GM12878 (cell line): ENCODE measurements at regions of chr18 and their contacts with region 1.

Region 1: GRCh38 chr18:31555971-31556747 is 35.5 kb upstream of the TTR start:
- DNase-seq: peak; percentile 39
- ATAC-seq: peak; percentile 88
- H3K4me3 ChIP-seq: no peak overlapping the region
- H3K27ac ChIP-seq: no peak overlapping the region
- H3K4me1 ChIP-seq: no peaks in the 10 kb centered on the region
- H3K27me3 ChIP-seq: no peaks in the 10 kb centered on the region
- CTCF ChIP-seq: peak; percentile 62 to 79 (median 72); a peak in 5 of 6 replicates
- EP300 ChIP-seq: no peak
- POLR2A ChIP-seq: no peak
- RAD21 ChIP-seq: peak; percentile 96

Region 2: GRCh38 chr18:30730915-30731314 is 825.2 kb before region 1 on chr18:
- CTCF ChIA-PET with region 1: no interaction called
- POLR2A ChIA-PET with region 1: no interaction called
- RAD21 ChIA-PET with region 1: no interaction called
- SMC1A ChIA-PET with region 1: no interaction called
- in situ Hi-C with region 1: no loop called
- intact Hi-C with region 1: no loop called
- DNase-seq: no peak
- ATAC-seq: no peak
- H3K4me3 ChIP-seq: no peak overlapping the region
- H3K27ac ChIP-seq: no peak overlapping the region
- H3K4me1 ChIP-seq: no peaks in the 10 kb centered on the region
- H3K27me3 ChIP-seq: no peaks in the 10 kb centered on the region
- CTCF ChIP-seq: no peak
- EP300 ChIP-seq: no peak
- POLR2A ChIP-seq: no peak
- RAD21 ChIP-seq: no peak

Region 3: GRCh38 chr18:30971338-30971956 is 584.7 kb before region 1 on chr18:
- CTCF ChIA-PET with region 1: interaction called, 3 read pairs
- POLR2A ChIA-PET with region 1: no interaction called
- RAD21 ChIA-PET with region 1: no interaction called
- SMC1A ChIA-PET with region 1: no interaction called
- in situ Hi-C with region 1: no loop called
- intact Hi-C with region 1: loop called (anchors 10 kb)
- DNase-seq: no peak
- ATAC-seq: peak; percentile 80
- H3K4me3 ChIP-seq: no peak overlapping the region
- H3K27ac ChIP-seq: no peak overlapping the region
- H3K4me1 ChIP-seq: no peaks in the 10 kb centered on the region
- H3K27me3 ChIP-seq: no peaks in the 10 kb centered on the region; a peak in 1 of 4 replicates
- CTCF ChIP-seq: peak; percentile 21 to 49 (median 41); a peak in 4 of 6 replicates
- EP300 ChIP-seq: no peak
- POLR2A ChIP-seq: no peak
- RAD21 ChIP-seq: peak; percentile 34; the same call in 1 of the 2 replicates

Region 4: DNA sequence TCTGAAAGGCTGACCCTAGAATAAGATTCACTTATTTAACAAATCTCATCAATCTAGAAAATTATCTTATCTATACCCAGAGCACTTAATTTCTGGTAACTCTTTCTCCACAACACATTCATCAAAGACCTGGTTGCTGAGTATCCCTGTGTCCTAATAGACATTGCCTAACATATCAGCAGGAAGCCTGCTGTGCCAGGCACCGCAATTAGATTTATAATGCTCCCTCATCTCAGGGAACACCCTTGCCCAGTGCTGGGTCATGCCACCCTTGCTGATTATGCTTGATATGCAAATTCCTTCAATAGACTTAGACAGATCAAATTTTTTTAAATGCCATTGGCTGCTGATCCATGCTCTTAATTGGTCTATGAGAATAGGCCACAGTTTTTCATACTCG is 234.4 kb before region 1 on chr18:
- CTCF ChIA-PET with region 1: no interaction called
- POLR2A ChIA-PET with region 1: no interaction called
- RAD21 ChIA-PET with region 1: no interaction called
- SMC1A ChIA-PET with region 1: no interaction called
- in situ Hi-C with region 1: no loop called
- intact Hi-C with region 1: no loop called
- DNase-seq: no peak
- ATAC-seq: no peak
- H3K4me3 ChIP-seq: no peak overlapping the region
- H3K27ac ChIP-seq: no peak overlapping the region
- H3K4me1 ChIP-seq: no peaks in the 10 kb centered on the region
- H3K27me3 ChIP-seq: no peaks in the 10 kb centered on the region
- CTCF ChIP-seq: no peak
- EP300 ChIP-seq: no peak
- POLR2A ChIP-seq: no peak
- RAD21 ChIP-seq: no peak

Region 5: GRCh38 chr18:31741097-31741735 is 185.1 kb after region 1 on chr18:
- CTCF ChIA-PET with region 1: interaction called, 11 read pairs
- POLR2A ChIA-PET with region 1: no interaction called
- RAD21 ChIA-PET with region 1: interaction called, 9 read pairs
- SMC1A ChIA-PET with region 1: interaction called, 7 read pairs
- in situ Hi-C with region 1: no loop called
- intact Hi-C with region 1: loop called (anchors 1 kb)
- DNase-seq: peak; percentile 16
- ATAC-seq: peak; percentile 72
- H3K4me3 ChIP-seq: no peak overlapping the region
- H3K27ac ChIP-seq: no peak overlapping the region
- H3K4me1 ChIP-seq: no peaks in the 10 kb centered on the region
- H3K27me3 ChIP-seq: no peaks in the 10 kb centered on the region
- CTCF ChIP-seq: peak; percentile 59 to 77 (median 74)
- EP300 ChIP-seq: no peak
- POLR2A ChIP-seq: no peak
- RAD21 ChIP-seq: peak; percentile 72

Region 6: DNA sequence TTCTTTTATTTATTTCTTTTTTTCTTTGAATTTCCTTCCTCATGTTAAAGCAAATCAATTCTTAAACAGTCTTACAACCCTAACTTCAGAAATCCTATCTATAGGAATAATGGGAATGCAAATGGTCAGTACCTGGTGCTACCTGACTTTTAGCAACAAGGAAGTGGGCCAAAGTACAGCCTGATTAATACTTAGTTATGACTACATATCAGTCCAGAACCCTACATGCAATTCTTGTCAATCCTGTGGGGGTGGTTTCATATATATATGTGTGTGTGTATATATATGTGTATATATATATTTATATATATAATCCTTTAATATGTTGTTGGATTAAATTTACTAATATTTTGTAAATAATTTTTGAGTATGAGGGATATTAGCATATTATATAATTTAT is 401.6 kb after region 1 on chr18:
- CTCF ChIA-PET with region 1: no interaction called
- POLR2A ChIA-PET with region 1: no interaction called
- RAD21 ChIA-PET with region 1: no interaction called
- SMC1A ChIA-PET with region 1: no interaction called
- in situ Hi-C with region 1: no loop called
- intact Hi-C with region 1: loop called (anchors 5 kb)
- DNase-seq: no peak
- ATAC-seq: peak; percentile 49; the same call in 1 of the 3 replicates
- H3K4me3 ChIP-seq: no peak overlapping the region
- H3K27ac ChIP-seq: no peak overlapping the region
- H3K4me1 ChIP-seq: no peaks in the 10 kb centered on the region
- H3K27me3 ChIP-seq: no peaks in the 10 kb centered on the region
- CTCF ChIP-seq: no peak
- EP300 ChIP-seq: no peak
- POLR2A ChIP-seq: no peak
- RAD21 ChIP-seq: no peak

Region 7: GRCh38 chr18:32104530-32104929 is 548.4 kb after region 1 on chr18:
- CTCF ChIA-PET with region 1: no interaction called
- POLR2A ChIA-PET with region 1: no interaction called
- RAD21 ChIA-PET with region 1: no interaction called
- SMC1A ChIA-PET with region 1: no interaction called
- in situ Hi-C with region 1: no loop called
- intact Hi-C with region 1: no loop called
- DNase-seq: no peak
- ATAC-seq: no peak
- H3K4me3 ChIP-seq: no peak overlapping the region
- H3K27ac ChIP-seq: no peak overlapping the region
- H3K4me1 ChIP-seq: no peaks in the 10 kb centered on the region
- H3K27me3 ChIP-seq: no peaks in the 10 kb centered on the region
- CTCF ChIP-seq: no peak
- EP300 ChIP-seq: no peak
- POLR2A ChIP-seq: no peak
- RAD21 ChIP-seq: no peak